ENCODE measurements at regions of chr1 and their contacts with region 1.

Region 1: GRCh38 chr1:34852677-34853217 is 6.8 kb downstream of the SMIM12 start:
- DNase-seq: peak; percentile 95
- ATAC-seq: peak; percentile 100
- H3K4me3 Mint-ChIP-seq: no peak overlapping the region
- H3K27ac Mint-ChIP-seq: peak overlapping the region; percentile 75
- H3K4me1 Mint-ChIP-seq: peaks cover 28% of the 10 kb centered on the region
- H3K27me3 Mint-ChIP-seq: no peaks in the 10 kb centered on the region
- CTCF ChIP-seq: peak; percentile 93

Region 2: DNA sequence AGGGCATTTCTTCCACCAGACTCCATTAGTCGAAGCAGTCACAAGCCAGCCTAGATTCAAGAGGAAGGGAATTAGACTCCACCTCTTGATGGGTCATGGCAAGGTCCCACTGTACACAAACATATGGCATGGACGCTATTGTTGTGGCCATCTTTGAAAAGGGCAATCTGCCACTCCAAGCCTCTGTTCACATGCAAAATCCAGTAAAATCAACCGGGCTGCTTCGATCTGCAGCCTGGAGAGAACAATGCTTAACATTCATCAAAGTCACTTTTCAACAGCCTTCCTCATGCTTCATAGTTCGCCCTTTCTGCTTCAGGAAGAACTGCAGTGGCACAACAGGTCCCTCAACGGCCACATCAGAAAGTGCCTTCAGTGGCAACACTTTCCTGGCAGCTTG is 125.9 kb before region 1 on chr1:
- CTCF ChIA-PET with region 1: no interaction called
- POLR2A ChIA-PET with region 1: no interaction called
- intact Hi-C with region 1: no loop called
- DNase-seq: no peak
- ATAC-seq: no peak
- H3K4me3 Mint-ChIP-seq: no peak overlapping the region
- H3K27ac Mint-ChIP-seq: no peak overlapping the region
- H3K4me1 Mint-ChIP-seq: no peaks in the 10 kb centered on the region
- H3K27me3 Mint-ChIP-seq: peaks cover 16% of the 10 kb centered on the region
- CTCF ChIP-seq: no peak

Region 3: DNA sequence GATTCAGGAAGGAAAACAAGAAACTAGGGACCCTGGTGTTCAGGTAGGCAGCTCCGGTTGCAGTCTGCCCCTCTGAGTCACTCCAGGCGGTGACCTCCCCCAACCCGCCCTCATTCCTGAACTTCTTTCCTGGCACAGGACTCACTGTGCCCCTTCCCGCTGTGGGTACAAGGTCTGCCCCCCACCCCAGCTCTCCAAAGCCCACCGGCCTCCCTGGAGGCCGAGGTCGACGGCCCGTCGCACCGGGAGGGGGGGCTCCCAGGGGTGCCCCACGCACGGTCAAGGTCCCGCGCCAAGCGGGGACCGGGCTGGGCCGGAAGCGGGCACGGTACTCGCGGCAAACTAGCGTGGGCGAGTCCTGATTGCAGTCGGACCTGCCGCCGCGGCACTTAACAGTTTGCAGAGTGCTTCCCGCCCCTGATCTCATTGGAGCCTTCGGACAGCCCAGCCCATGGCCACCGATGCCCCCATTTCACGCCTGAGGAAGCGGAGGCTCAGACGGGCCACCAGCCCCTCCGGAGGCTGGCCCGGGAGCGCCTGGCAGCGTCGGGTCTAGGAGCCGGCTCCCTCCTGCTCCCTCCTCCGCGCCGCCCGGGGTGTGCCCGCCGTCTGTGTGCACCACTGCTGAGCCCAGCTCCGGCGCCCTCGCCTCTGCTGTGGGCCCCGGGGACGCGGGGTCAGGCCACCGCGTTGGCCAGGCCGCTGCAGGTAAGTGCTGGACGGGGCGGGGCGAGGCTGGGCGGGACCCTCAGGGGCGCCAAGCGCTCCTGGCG is 71.5 kb before region 1 on chr1 and contains the start of gene GJB3:
- CTCF ChIA-PET with region 1: interaction called, 14 read pairs
- POLR2A ChIA-PET with region 1: no interaction called
- intact Hi-C with region 1: loop called (anchors 1 kb)
- DNase-seq: peak; percentile 36
- ATAC-seq: peak; percentile 49
- H3K4me3 Mint-ChIP-seq: no peak within 1 kb of the TSS
- H3K27ac Mint-ChIP-seq: no peak within 1 kb of the TSS
- H3K4me1 Mint-ChIP-seq: peaks cover 2% of the 10 kb centered on the region
- H3K27me3 Mint-ChIP-seq: peaks cover 38% of the 10 kb centered on the region
- CTCF ChIP-seq: no peak
- total RNA-seq, gene GJB3: not detected

Region 4: GRCh38 chr1:34786521-34787325 is 66.0 kb before region 1 on chr1:
- CTCF ChIA-PET with region 1: interaction called, 14 read pairs
- POLR2A ChIA-PET with region 1: no interaction called
- intact Hi-C with region 1: loop called (anchors 1 kb)
- DNase-seq: peak; percentile 85
- ATAC-seq: peak; percentile 85
- H3K4me3 Mint-ChIP-seq: no peak overlapping the region
- H3K27ac Mint-ChIP-seq: no peak overlapping the region
- H3K4me1 Mint-ChIP-seq: peaks cover 6% of the 10 kb centered on the region
- H3K27me3 Mint-ChIP-seq: peaks cover 42% of the 10 kb centered on the region
- CTCF ChIP-seq: peak; percentile 77

Region 5: DNA sequence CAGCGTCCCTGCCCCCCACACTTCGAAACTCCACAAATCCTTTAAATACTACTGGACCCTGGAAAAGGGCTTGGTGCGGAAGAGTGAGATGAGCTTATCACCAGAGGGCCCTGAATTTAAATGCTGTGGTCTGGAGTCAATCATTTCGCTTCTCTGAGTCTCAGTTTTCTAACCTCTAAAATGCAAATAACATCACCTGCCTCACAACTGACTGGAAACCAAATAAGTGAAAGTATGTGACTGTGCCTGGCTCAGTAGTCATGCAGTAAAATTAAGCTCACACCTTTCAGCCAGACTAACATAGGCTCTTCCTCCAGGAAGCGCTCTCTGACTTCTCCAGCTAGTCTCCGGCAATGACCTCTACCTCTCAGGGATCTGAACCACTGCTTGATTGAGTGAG is 55.8 kb before region 1 on chr1:
- CTCF ChIA-PET with region 1: interaction called, 12 read pairs
- POLR2A ChIA-PET with region 1: no interaction called
- intact Hi-C with region 1: no loop called
- DNase-seq: no peak
- ATAC-seq: peak; percentile 25
- H3K4me3 Mint-ChIP-seq: no peak overlapping the region
- H3K27ac Mint-ChIP-seq: no peak overlapping the region
- H3K4me1 Mint-ChIP-seq: peaks cover 12% of the 10 kb centered on the region
- H3K27me3 Mint-ChIP-seq: peaks cover 7% of the 10 kb centered on the region
- CTCF ChIP-seq: no peak

Region 6: DNA sequence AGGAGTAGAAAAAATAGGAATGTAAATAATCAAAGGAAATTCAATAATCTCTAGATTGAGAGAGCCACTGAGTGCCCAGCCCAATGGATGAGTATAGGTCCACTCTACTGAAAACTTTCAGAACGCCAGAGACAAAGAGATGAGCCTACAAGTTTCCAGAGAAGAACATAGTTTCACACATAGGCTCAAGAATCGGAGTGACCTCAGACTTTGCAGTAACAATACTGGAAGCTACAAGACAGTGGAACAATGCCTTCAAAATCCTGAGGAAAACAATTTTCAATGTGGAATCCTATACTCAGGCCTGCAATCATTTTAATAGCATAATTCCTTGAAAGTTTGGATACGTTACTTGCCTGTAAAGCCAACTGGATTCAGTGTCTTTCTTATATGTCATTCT is 49.0 kb before region 1 on chr1:
- CTCF ChIA-PET with region 1: interaction called, 12 read pairs
- POLR2A ChIA-PET with region 1: no interaction called
- intact Hi-C with region 1: no loop called
- DNase-seq: no peak
- ATAC-seq: no peak
- H3K4me3 Mint-ChIP-seq: no peak overlapping the region
- H3K27ac Mint-ChIP-seq: no peak overlapping the region
- H3K4me1 Mint-ChIP-seq: peaks cover 8% of the 10 kb centered on the region
- H3K27me3 Mint-ChIP-seq: no peaks in the 10 kb centered on the region
- CTCF ChIP-seq: no peak

Region 7: GRCh38 chr1:34865981-34866761 is 13.4 kb after region 1 on chr1:
- CTCF ChIA-PET with region 1: interaction called, 82 read pairs
- POLR2A ChIA-PET with region 1: interaction called, 7 read pairs
- intact Hi-C with region 1: no loop called
- DNase-seq: peak; percentile 96
- ATAC-seq: peak; percentile 68
- H3K4me3 Mint-ChIP-seq: peak overlapping the region; percentile 77
- H3K27ac Mint-ChIP-seq: peak overlapping the region; percentile 90
- H3K4me1 Mint-ChIP-seq: peaks cover 29% of the 10 kb centered on the region
- H3K27me3 Mint-ChIP-seq: no peaks in the 10 kb centered on the region
- CTCF ChIP-seq: peak; percentile 97

Region 8: DNA sequence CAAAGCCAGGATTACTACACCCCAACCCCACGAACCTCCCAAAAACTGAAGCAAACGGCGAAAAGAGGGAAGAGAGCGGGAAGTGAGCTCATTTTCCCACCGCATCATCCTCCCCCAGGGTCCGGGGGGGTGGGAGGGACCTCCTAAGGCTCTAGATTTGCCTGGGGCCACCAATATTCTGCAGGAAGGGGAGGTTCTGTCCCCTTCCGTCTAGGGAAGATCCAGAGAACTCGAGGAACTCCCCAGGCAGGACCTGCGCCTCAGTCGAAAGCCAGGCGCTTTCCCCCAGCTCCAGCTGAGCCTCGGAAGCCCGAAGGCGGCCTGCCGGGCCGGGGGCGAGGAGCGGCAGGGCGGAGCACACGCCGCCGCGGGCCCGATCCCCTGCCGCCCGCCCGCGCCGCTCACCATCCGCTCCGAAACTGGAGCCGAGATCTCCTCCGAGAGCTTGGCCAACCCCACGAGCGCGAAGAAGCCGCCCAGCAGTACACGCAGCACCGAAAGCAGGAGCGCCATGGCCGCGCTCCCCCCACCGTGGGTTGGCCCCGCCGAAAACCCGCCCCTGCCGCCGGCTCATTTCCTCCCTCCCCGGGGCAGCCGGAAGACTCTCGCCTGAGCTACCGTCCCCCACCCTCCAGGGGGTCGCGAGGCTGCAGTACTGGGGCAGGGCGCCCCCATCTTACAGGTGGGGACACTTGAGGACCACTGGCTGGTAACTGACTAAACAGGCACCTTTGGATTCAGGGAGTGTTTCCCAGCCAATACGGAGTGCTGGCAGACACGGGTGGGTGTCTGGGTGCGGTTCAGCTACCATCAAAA is 132.3 kb after region 1 on chr1 and contains the start of gene TMEM35B:
- CTCF ChIA-PET with region 1: interaction called, 16 read pairs
- POLR2A ChIA-PET with region 1: no interaction called
- intact Hi-C with region 1: no loop called
- DNase-seq: peak; percentile 82
- ATAC-seq: peak; percentile 94
- H3K4me3 Mint-ChIP-seq: peak within 1 kb of the TSS; percentile 98
- H3K27ac Mint-ChIP-seq: peak within 1 kb of the TSS; percentile 98
- H3K4me1 Mint-ChIP-seq: peaks cover 48% of the 10 kb centered on the region
- H3K27me3 Mint-ChIP-seq: no peaks in the 10 kb centered on the region
- CTCF ChIP-seq: peak; percentile 29
- total RNA-seq, gene TMEM35B: 19.4 to 19.5 TPM